ENCODE measurements at regions of chr18 and their contacts with region 1.

Region 1: DNA sequence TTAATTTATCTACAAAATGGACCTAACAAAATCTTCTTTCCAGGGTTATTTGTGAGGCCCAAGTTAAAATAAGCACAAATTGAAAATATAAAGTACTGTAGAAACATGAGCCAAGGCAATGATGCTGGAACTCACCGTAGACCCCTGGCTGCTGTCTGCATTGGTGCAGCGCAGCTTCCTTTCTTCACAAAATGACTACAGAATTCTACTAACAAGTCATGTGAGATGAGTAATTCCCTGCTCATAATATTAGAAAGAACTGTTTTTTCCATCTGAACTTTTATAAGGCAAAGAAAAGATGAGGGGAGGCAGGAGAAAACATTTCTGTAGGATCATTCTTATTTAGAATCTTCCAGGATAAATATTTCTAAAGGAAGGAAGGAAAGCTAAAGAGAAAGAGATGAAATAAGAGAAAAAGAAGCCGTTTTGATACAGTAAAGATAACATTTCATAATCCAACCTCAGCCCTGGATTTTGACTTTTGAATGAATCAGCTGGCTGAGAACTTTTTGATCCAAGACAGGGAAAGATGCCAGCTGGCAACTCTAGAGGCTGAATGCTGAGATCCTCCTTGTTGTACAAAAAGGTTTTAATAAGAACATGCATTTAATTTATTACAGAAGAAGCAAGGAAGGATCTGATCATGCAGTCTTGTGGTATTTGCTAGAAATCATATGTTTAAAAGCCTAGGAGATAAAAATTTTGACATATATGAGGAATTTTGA is 183.9 kb upstream of the KLHL14 start:
- H3K4me3 Mint-ChIP-seq: no peak overlapping the region
- H3K27ac Mint-ChIP-seq: no peak overlapping the region
- H3K4me1 Mint-ChIP-seq: no peaks in the 10 kb centered on the region
- H3K27me3 Mint-ChIP-seq: no peaks in the 10 kb centered on the region

Region 2: DNA sequence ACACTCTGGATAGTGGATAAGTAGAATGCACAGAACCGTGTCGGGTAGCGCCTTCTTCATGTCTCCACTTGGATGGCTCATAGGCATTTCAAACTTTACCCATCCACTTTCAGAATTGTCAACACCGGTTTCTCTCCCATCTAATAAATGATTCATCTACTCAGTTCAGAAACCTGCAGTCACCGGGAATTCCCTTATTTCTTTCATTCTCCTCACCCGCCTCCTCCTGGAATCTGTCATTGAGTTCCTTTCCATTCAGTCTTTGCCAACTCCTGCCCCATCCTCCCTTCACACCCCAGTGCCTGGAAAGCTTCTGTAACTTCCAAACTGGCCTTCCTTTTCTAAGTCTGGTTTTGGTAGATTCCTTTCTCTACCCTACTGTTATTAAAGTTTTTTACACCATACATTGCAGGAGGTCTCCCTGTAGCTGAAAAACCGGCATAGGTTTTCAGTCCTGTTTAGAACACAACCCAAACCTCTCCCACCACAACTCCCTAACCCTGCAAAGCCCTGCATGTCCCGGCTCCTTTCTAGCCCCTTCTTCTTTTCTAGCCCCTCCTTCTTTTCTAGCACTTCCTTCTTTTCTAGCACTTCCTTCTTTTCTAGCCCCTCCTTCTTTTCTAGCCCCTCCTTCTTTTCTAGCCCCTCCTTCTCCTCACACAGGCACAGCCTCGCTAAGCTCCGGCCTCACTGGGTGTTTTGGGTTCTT is 50.1 kb before region 1 on chr18:
- intact Hi-C with region 1: loop called (anchors 5 kb)
- H3K4me3 Mint-ChIP-seq: no peak overlapping the region
- H3K27ac Mint-ChIP-seq: no peak overlapping the region
- H3K4me1 Mint-ChIP-seq: peaks cover 7% of the 10 kb centered on the region
- H3K27me3 Mint-ChIP-seq: no peaks in the 10 kb centered on the region